Activated B cell treated with CpG ODN at 0.5 μM for 24 hours (primary cell): ENCODE measurements at regions of chr9 and their contacts with region 1.

Region 1: DNA sequence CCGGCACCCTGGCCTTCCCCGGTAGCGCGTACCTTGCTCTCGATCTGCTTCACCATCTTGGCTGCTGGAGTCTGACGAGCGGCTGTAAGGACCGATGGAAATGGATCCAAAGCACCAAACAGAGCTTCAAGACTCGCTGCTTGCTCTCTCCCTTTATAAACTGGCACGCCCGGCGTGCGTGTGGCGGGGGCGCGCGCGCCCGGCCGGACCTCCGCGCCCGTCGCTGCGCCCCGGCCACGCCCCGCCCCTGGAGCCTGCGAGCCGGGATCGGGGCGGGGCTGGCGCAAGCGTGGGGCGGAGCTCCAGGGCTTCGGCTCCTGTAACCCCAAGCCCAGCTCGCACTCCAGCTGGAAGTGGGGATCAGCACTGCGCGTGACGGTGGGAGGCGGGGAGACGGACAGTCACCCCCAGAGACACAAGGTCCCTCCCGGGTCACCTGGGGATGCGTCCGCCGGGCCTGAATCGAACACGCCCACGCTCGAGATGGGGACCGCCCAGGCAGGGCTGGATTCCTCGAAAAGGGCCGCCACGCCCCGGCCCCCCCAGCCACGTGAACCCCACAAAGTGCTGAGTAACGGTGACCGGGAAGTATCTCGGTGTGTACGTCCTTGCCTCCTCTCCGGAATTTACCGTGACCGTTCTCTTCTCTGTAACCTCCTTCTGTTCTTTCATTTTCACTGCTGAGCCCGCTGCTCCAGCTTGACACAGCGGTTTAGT is at the start of gene TXN:
- DNase-seq: peak; percentile 84
- ATAC-seq: peak; percentile 80
- H3K4me3 Mint-ChIP-seq: peak within 1 kb of the TSS; percentile 92
- H3K27ac Mint-ChIP-seq: peak within 1 kb of the TSS; percentile 92
- H3K4me1 Mint-ChIP-seq: peaks cover 63% of the 10 kb centered on the region
- H3K27me3 Mint-ChIP-seq: no peaks in the 10 kb centered on the region
- CTCF ChIP-seq: no peak
- total RNA-seq, gene TXN: 205 and 237 TPM in 2 replicates

Region 2: DNA sequence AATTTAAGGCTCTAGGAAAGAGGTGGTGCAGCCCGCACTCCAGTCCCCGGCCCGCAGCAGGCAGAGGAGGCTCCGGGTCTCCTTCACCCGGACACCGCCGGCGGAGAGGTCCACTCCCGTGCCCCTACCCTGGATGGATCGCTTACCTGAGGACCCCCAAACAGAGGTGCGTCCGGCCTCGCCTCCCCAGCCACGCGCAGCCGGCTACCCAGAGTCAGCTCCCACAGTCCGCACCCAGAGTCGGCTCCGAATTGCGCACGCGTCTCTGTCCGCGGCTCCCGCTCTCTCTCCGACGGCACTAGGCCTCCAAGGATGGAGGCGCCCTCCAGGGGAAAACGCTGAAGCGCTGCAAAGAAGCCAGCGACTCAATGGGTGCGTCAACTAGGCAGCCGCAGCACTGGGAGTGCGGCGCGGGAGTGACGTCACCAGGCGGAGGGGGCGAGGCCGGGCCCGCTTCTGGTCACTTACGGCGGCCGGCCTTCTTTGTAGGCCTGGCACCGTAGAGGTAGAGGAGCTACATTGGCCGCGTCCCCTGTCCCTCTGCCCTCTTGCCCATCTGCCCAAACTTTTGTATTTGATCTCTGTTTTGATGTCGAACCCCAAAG is 1322.7 kb before region 1 on chr9 and contains the start of gene ELP1:
- CTCF ChIA-PET with region 1: no interaction called
- POLR2A ChIA-PET with region 1: no interaction called
- intact Hi-C with region 1: loop called (anchors 5 kb)
- DNase-seq: peak; percentile 86
- ATAC-seq: peak; percentile 83
- H3K4me3 Mint-ChIP-seq: peak within 1 kb of the TSS; percentile 97
- H3K27ac Mint-ChIP-seq: peak within 1 kb of the TSS; percentile 89
- H3K4me1 Mint-ChIP-seq: peaks cover 23% of the 10 kb centered on the region
- H3K27me3 Mint-ChIP-seq: no peaks in the 10 kb centered on the region
- CTCF ChIP-seq: no peak
- total RNA-seq, gene ELP1: 20.3 and 25.0 TPM in 2 replicates

Region 3: GRCh38 chr9:109119439-109120203 is 1136.9 kb before region 1 on chr9 and contains the start of gene TMEM245:
- CTCF ChIA-PET with region 1: no interaction called
- POLR2A ChIA-PET with region 1: no interaction called
- intact Hi-C with region 1: loop called (anchors 1 kb)
- DNase-seq: peak; percentile 86
- ATAC-seq: peak; percentile 95
- H3K4me3 Mint-ChIP-seq: peak within 1 kb of the TSS; percentile 88
- H3K27ac Mint-ChIP-seq: peak within 1 kb of the TSS; percentile 82
- H3K4me1 Mint-ChIP-seq: peaks cover 36% of the 10 kb centered on the region
- H3K27me3 Mint-ChIP-seq: no peaks in the 10 kb centered on the region
- CTCF ChIP-seq: no peak
- total RNA-seq, gene TMEM245: 16.1 and 20.6 TPM in 2 replicates

Region 4: DNA sequence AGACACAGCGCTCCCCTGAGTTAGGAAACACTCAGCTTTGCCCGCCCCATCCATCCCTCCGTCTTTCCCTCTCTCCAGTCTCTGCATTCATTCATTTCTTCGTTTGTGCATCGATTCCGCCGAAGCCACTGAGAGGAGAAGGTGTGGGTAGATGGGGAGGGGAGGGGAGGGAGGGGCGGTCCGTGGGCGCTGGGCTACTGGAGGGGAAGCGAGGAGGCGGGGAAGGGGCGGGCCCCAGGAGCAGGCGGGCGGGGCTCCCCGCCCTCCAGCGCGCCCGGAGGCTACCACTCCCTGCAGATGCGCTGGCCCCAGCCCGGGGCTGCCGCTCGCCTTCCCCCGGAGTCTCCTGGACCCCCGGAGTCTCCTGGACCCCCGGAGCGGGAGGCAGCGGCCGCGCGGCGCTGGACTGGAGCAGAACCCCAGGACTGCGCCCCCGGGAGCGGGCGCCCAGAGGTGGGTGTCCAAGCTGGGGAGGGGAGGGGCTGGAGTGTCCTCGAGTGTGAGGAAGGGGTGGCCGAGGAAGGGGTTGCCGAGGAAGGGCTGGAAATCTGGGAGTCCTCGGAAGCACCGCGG is 208.0 kb before region 1 on chr9:
- CTCF ChIA-PET with region 1: no interaction called
- POLR2A ChIA-PET with region 1: no interaction called
- intact Hi-C with region 1: loop called (anchors 1 kb)
- DNase-seq: peak; percentile 85
- ATAC-seq: peak; percentile 94
- H3K4me3 Mint-ChIP-seq: peak overlapping the region; percentile 99
- H3K27ac Mint-ChIP-seq: peak overlapping the region; percentile 91
- H3K4me1 Mint-ChIP-seq: peaks cover 54% of the 10 kb centered on the region
- H3K27me3 Mint-ChIP-seq: no peaks in the 10 kb centered on the region
- CTCF ChIP-seq: no peak

Region 5: GRCh38 chr9:110081395-110081794 is 175.1 kb before region 1 on chr9:
- CTCF ChIA-PET with region 1: no interaction called
- POLR2A ChIA-PET with region 1: no interaction called
- intact Hi-C with region 1: no loop called
- DNase-seq: no peak
- ATAC-seq: no peak
- H3K4me3 Mint-ChIP-seq: peak overlapping the region; percentile 52
- H3K27ac Mint-ChIP-seq: peak overlapping the region; percentile 66
- H3K4me1 Mint-ChIP-seq: peaks cover 91% of the 10 kb centered on the region
- H3K27me3 Mint-ChIP-seq: no peaks in the 10 kb centered on the region
- CTCF ChIP-seq: no peak

Region 6: DNA sequence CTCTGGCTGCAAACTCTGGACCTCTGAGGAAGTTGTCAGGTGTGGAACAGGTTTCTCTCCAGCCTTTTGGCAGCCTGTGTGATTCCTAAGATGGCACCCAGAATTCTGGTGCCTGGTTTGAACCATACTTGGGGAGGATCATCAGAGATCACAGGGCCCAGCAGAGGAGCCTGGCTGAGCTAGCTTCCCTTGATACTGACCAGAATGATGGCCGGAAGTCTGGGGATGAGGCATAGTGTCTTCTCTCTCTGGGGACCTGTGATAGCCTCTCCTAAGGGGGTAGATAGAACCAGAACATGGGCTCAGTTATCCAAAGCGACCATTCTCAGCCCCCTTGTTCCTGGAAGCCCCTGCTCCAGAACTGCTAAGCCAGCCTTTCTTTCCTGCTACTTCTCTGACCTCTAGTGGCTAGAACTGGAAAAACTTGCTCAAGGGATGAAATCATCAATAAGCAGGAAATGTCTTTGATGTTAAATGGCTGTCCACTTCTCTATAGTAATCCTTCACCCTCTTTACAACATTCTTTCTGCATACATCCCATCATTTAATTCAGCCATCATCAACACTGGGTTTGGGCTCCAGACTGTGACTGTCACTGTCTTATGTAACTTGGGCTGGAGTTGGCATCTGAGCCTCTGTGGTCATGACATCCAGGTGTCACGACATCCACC is 103.7 kb before region 1 on chr9:
- CTCF ChIA-PET with region 1: no interaction called
- POLR2A ChIA-PET with region 1: interaction called, 4 read pairs
- intact Hi-C with region 1: loop called (anchors 5 kb)
- DNase-seq: no peak
- ATAC-seq: peak; percentile 32
- H3K4me3 Mint-ChIP-seq: peak overlapping the region; percentile 39
- H3K27ac Mint-ChIP-seq: peak overlapping the region; percentile 81
- H3K4me1 Mint-ChIP-seq: peaks cover 100% of the 10 kb centered on the region
- H3K27me3 Mint-ChIP-seq: no peaks in the 10 kb centered on the region
- CTCF ChIP-seq: no peak

Region 7: DNA sequence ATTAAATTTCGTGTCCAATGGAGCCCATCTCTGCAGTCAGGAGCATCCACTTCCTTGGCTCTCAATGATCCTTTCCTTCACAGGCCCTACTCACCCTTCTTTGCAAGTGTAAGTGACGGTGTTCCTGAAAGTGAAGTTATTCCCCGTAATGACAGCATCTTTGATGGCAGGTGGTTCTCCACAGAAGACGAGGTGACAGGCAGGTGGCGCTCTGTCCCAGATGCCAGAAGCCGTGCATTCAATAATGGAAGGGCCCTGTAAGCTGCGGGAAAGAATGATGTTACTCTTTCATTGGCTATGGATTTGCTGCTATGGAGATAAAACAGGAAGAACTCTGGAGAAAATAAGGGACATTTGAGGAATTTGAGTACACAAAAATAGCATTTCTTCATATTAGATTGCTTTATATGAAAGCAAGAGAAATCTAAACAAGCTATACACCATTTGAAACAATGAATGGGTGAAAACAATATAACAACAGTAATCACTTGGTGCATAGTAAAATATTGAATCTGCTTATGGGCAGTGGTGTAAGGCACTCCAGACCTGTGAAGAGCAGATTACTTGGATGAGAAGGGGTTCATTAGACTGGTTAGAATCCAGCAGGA is 171.1 kb after region 1 on chr9:
- CTCF ChIA-PET with region 1: no interaction called
- POLR2A ChIA-PET with region 1: no interaction called
- intact Hi-C with region 1: loop called (anchors 10 kb)
- DNase-seq: no peak
- ATAC-seq: no peak
- H3K4me3 Mint-ChIP-seq: no peak overlapping the region
- H3K27ac Mint-ChIP-seq: no peak overlapping the region
- H3K4me1 Mint-ChIP-seq: no peaks in the 10 kb centered on the region
- H3K27me3 Mint-ChIP-seq: peaks cover 2% of the 10 kb centered on the region
- CTCF ChIP-seq: no peak